ENCODE measurements at regions of chr5 and their contacts with region 1.

Region 1: GRCh38 chr5:113612060-113612496 is 98.6 kb downstream of the YTHDC2 start:
- DNase-seq: no peak
- H3K4me3 ChIP-seq: no peak overlapping the region
- H3K27ac ChIP-seq: no peak overlapping the region
- H3K4me1 ChIP-seq: peaks cover 0 to 3% (median 0%) of the 10 kb centered on the region in 4 donors
- H3K27me3 ChIP-seq: peaks cover 13% of the 10 kb centered on the region
- CTCF ChIP-seq: peak; percentile 52 to 62 (median 58)
- EP300 ChIP-seq: no peak
- POLR2A ChIP-seq: no peak

Region 2: DNA sequence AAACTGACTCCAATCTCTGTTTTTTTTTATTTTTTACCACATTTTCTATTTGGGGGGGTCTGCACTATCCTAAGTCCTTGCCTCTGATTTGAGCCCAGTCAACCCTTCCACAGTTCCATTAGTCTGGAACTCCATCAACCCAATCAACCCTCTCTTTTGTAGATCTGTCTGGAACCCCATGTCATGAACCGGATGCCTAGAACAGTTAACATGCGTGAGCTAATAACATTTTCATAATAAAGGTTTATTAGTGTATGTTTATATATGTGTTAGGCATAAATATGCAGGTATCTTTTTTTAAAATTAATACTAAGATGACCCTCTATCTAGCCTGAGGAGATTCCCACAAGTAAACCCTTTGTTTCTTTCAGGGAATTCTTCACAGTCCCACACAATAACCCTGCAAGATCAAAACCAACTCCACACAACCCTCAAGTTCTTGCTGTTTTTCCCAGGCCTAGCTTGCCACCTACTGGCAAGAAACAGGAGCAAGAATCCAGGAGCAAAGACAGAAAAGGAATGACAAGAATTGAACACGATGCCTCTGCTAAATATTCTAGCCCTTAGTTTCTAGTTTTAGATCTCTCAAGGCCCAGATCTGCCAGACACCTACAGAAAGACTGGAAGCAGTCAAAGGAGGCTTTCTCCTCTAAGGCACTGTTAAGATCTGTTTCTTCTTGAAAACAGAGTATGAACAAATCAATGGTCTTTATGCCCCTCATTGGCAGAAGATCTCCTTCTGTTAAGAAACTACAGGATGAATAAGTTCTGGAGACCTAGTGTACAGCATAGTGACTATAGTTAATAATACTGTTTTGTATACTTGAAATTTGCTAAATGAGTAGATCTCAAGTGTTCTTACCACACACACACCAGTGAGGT is 1457.2 kb after region 1 on chr5:
- in situ Hi-C with region 1: no loop called
- intact Hi-C with region 1: loop called (anchors 10 kb)
- DNase-seq: peak; percentile 8
- H3K4me3 ChIP-seq: no peak overlapping the region
- H3K27ac ChIP-seq: no peak overlapping the region
- H3K4me1 ChIP-seq: peaks cover 0 to 3% (median 0%) of the 10 kb centered on the region in 4 donors
- H3K27me3 ChIP-seq: peaks cover 7% of the 10 kb centered on the region
- CTCF ChIP-seq: peak; percentile 33 to 46 (median 39)
- EP300 ChIP-seq: no peak
- POLR2A ChIP-seq: no peak